ENCODE measurements at regions of chr1 and their contacts with region 1.

Region 1: DNA sequence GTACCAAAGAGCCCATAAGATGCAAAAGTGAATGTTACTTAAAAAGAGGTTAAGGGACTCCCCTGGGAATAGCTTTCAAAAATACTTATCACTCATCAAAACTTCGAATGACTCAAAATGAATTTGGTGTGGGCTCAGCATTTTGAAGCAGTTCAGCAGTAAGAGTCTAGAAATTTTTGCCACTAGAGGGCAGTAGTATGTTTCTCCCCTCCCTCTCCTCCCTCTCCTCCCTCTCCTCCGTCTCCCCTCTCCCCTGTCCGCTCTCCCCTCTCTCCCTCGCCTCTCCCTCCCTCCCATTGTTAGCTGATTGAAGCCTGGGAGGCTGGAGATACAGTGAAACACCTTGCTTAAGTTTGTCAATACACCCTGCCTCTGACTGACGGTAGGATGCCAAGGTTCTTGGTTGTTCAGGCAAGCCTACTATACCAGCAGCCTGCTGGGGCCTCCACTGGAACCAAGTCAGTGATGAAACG is 70.8 kb upstream of the TENT5C start:
- DNase-seq: no peak
- ATAC-seq: peak; percentile 88 to 95 (median 91)
- H3K4me3 ChIP-seq: no peak overlapping the region
- H3K27ac ChIP-seq: no peak overlapping the region
- H3K4me1 ChIP-seq: peaks cover 0 to 3% (median 0%) of the 10 kb centered on the region in 4 donors
- H3K27me3 ChIP-seq: no peaks in the 10 kb centered on the region
- CTCF ChIP-seq: peak; percentile 55 to 66 (median 62)
- POLR2A ChIP-seq: no peak

Region 2: DNA sequence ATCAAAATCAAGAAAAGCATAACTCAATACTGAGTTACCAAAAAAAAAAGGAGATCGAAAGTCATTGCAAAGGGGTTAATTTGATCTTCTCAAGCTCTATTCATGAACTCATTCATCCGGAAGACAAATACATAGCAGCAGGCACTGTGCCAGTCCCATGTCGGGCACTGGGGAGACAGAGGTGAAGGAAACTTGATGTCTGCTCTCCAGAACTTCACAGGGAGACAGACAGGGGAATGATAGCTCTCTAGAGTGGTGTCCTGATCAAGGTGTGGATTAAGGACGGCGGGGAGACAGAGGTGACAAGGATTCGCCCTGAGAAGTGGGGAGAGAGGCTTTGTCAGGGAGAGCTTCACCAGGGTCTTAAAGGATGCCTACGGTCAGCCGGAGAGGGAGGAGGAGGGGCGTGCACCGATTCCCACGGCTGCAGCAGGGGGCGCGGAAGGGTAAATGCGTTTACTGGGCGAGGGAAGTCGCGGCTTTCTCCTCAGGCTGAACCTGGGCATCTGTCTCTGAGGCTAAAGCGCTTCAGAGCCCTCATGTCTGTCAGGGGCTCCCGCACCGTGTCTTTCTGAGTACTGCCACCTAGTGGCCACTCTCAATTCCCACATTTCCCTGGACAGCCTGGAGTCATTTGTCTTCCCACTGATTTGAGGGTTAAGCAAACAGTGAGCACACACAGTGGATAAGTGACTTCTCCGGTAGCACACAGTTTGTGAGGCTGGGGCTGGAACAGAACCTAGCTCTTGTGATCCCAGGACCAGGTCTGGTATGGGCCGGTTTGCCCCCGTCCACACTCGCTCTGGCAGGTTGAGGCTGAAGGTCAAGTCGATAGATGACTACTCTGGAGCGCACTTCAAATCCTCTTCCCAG is 223.6 kb after region 1 on chr1:
- intact Hi-C with region 1: loop called (anchors 10 kb)
- DNase-seq: peak; percentile 53 to 71 (median 63)
- ATAC-seq: peak; percentile 85 to 89 (median 88)
- H3K4me3 ChIP-seq: peak overlapping the region in 2 of 3 donors; percentile 18 to 42
- H3K27ac ChIP-seq: no peak overlapping the region
- H3K4me1 ChIP-seq: peaks cover 0 to 16% (median 7%) of the 10 kb centered on the region in 4 donors
- H3K27me3 ChIP-seq: no peaks in the 10 kb centered on the region
- CTCF ChIP-seq: peak; percentile 80 to 94 (median 93)
- POLR2A ChIP-seq: no peak